ENCODE measurements at regions of chr6 and their contacts with region 1.

Region 1: DNA sequence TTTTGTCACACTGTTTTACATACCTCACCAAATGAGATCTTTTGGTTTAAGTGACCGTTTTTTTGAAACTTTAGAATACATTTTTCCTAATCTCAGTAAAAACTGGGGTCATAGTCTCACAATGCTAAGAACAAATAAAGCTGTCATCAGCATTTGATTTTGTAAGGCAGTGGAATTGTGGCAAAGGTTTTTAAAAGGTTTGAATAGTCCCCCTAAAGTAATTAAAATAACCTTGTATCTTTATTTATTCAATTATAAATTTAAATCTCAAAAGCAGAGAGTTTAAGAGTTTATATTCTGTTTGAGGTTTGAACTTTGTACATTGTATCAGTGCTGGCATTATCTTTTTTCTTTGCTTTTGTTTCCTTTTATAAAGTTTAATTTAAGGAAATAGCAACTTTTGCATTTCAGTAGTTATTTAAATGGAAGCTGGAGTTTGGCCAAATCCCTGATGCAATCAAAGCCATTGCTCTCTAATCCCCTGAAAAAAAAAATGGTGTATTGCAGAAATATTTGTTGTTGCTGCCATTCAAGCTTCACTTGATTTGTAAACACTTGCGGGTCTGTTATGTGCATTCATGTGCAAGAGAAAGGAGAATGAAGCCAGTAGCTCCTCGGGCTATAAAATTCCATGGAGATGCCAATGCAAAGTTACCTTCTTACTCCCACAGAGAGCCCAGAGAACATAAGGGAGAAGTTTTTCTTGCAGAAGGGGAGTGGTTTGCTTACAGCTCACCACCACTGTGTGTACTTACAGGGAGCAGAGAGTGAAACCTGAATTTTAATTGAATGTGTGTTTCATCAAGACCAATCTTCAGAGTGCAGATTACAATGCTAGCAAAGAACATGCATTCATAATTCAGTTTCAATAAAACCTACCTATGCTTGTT is 391.8 kb downstream of the ARHGAP18 start:
- DNase-seq: no peak
- H3K4me3 ChIP-seq: no peak overlapping the region
- H3K27ac ChIP-seq: no peak overlapping the region
- H3K4me1 ChIP-seq: no peaks in the 10 kb centered on the region
- H3K27me3 ChIP-seq: no peaks in the 10 kb centered on the region
- CTCF ChIP-seq: no peak
- EP300 ChIP-seq: no peak
- POLR2A ChIP-seq: no peak

Region 2: GRCh38 chr6:129140526-129140925 is 177.7 kb before region 1 on chr6:
- intact Hi-C with region 1: loop called in 1 of 4 experiments (anchors 10 kb)
- DNase-seq: peak; percentile 33 to 71 (median 49)
- H3K4me3 ChIP-seq: no peak overlapping the region
- H3K27ac ChIP-seq: peak overlapping the region; percentile 27 to 42
- H3K4me1 ChIP-seq: peaks cover 8% of the 10 kb centered on the region
- H3K27me3 ChIP-seq: no peaks in the 10 kb centered on the region
- CTCF ChIP-seq: no peak
- EP300 ChIP-seq: no peak
- POLR2A ChIP-seq: no peak

Measured in ovary (tissue), 10 donors.